ENCODE measurements at regions of chr7 and their contacts with region 1.

Region 1: GRCh38 chr7:74254129-74254857 is at the start of gene RFC2:
- DNase-seq: peak; percentile 92 to 100 (median 98)
- ATAC-seq: peak; percentile 99
- H3K4me3 ChIP-seq: peak within 1 kb of the TSS; percentile 93
- H3K4me3 Mint-ChIP-seq: peak within 1 kb of the TSS; percentile 90 to 97 (median 94)
- H3K27ac ChIP-seq: peak within 1 kb of the TSS; percentile 90
- H3K27ac Mint-ChIP-seq: peak within 1 kb of the TSS; percentile 92 to 97 (median 95)
- H3K4me1 ChIP-seq: peaks cover 6 to 8% of the 10 kb centered on the region in 2 donors
- H3K4me1 Mint-ChIP-seq: peaks cover 0 to 37% (median 27%) of the 10 kb centered on the region in 7 donors
- H3K27me3 ChIP-seq: no peaks in the 10 kb centered on the region
- H3K27me3 Mint-ChIP-seq: no peaks in the 10 kb centered on the region
- total RNA-seq, gene RFC2: 12.0 to 51.7 (median 15.2) TPM

Region 2: GRCh38 chr7:73557108-73557396 is 697.2 kb before region 1 on chr7:
- CTCF ChIA-PET with region 1: interaction called, 4 read pairs
- POLR2A ChIA-PET with region 1: no interaction called
- intact Hi-C with region 1: loop called in 1 of 2 experiments (anchors 5 kb)
- DNase-seq: peak; percentile 86 to 95 (median 91)
- ATAC-seq: peak; percentile 93
- H3K4me3 ChIP-seq: peak overlapping the region; percentile 81
- H3K4me3 Mint-ChIP-seq: peak overlapping the region; percentile 88 to 97 (median 93)
- H3K27ac ChIP-seq: peak overlapping the region; percentile 100
- H3K27ac Mint-ChIP-seq: peak overlapping the region; percentile 92 to 98 (median 95)
- H3K4me1 ChIP-seq: peaks cover 17 to 23% of the 10 kb centered on the region in 2 donors
- H3K4me1 Mint-ChIP-seq: peaks cover 24 to 41% (median 33%) of the 10 kb centered on the region in 7 donors
- H3K27me3 ChIP-seq: no peaks in the 10 kb centered on the region
- H3K27me3 Mint-ChIP-seq: no peaks in the 10 kb centered on the region

Region 3: GRCh38 chr7:74173866-74174605 is 80.3 kb before region 1 on chr7 and contains the start of gene EIF4H:
- CTCF ChIA-PET with region 1: no interaction called
- POLR2A ChIA-PET with region 1: interaction called, 5 read pairs
- intact Hi-C with region 1: loop called (anchors 1 kb)
- DNase-seq: peak; percentile 90 to 97 (median 95)
- ATAC-seq: peak; percentile 97
- H3K4me3 ChIP-seq: peak within 1 kb of the TSS; percentile 87
- H3K4me3 Mint-ChIP-seq: peak within 1 kb of the TSS; percentile 86 to 98 (median 92)
- H3K27ac ChIP-seq: peak within 1 kb of the TSS; percentile 99
- H3K27ac Mint-ChIP-seq: peak within 1 kb of the TSS; percentile 88 to 97 (median 94)
- H3K4me1 ChIP-seq: peaks cover 41 to 43% of the 10 kb centered on the region in 2 donors
- H3K4me1 Mint-ChIP-seq: peaks cover 32 to 57% (median 47%) of the 10 kb centered on the region in 7 donors
- H3K27me3 ChIP-seq: no peaks in the 10 kb centered on the region
- H3K27me3 Mint-ChIP-seq: no peaks in the 10 kb centered on the region
- total RNA-seq, gene EIF4H: 163 to 284 (median 223) TPM

Region 4: GRCh38 chr7:74269757-74270277 is 15.5 kb after region 1 on chr7:
- CTCF ChIA-PET with region 1: no interaction called
- POLR2A ChIA-PET with region 1: interaction called, 3 read pairs
- intact Hi-C with region 1: loop called (anchors 1 to 2 kb)
- DNase-seq: peak in 8 of 9 donors; percentile 36 to 68 (median 58)
- ATAC-seq: peak; percentile 85
- H3K4me3 ChIP-seq: peak overlapping the region; percentile 58
- H3K4me3 Mint-ChIP-seq: peak overlapping the region; percentile 73 to 94 (median 88)
- H3K27ac ChIP-seq: no peak overlapping the region
- H3K27ac Mint-ChIP-seq: peak overlapping the region in 3 of 9 donors; percentile 33 to 70 (median 51)
- H3K4me1 ChIP-seq: no peaks in the 10 kb centered on the region
- H3K4me1 Mint-ChIP-seq: peaks cover 0 to 14% (median 4%) of the 10 kb centered on the region in 7 donors
- H3K27me3 ChIP-seq: no peaks in the 10 kb centered on the region
- H3K27me3 Mint-ChIP-seq: peaks cover 0 to 23% (median 4%) of the 10 kb centered on the region in 5 donors

Region 5: GRCh38 chr7:74525880-74526279 is 271.6 kb after region 1 on chr7:
- CTCF ChIA-PET with region 1: no interaction called
- POLR2A ChIA-PET with region 1: no interaction called
- intact Hi-C with region 1: no loop called
- DNase-seq: no peak
- ATAC-seq: no peak
- H3K4me3 ChIP-seq: no peak overlapping the region
- H3K4me3 Mint-ChIP-seq: no peak overlapping the region
- H3K27ac ChIP-seq: no peak overlapping the region
- H3K27ac Mint-ChIP-seq: no peak overlapping the region
- H3K4me1 ChIP-seq: no peaks in the 10 kb centered on the region
- H3K4me1 Mint-ChIP-seq: no peaks in the 10 kb centered on the region
- H3K27me3 ChIP-seq: no peaks in the 10 kb centered on the region
- H3K27me3 Mint-ChIP-seq: no peaks in the 10 kb centered on the region

Region 6: DNA sequence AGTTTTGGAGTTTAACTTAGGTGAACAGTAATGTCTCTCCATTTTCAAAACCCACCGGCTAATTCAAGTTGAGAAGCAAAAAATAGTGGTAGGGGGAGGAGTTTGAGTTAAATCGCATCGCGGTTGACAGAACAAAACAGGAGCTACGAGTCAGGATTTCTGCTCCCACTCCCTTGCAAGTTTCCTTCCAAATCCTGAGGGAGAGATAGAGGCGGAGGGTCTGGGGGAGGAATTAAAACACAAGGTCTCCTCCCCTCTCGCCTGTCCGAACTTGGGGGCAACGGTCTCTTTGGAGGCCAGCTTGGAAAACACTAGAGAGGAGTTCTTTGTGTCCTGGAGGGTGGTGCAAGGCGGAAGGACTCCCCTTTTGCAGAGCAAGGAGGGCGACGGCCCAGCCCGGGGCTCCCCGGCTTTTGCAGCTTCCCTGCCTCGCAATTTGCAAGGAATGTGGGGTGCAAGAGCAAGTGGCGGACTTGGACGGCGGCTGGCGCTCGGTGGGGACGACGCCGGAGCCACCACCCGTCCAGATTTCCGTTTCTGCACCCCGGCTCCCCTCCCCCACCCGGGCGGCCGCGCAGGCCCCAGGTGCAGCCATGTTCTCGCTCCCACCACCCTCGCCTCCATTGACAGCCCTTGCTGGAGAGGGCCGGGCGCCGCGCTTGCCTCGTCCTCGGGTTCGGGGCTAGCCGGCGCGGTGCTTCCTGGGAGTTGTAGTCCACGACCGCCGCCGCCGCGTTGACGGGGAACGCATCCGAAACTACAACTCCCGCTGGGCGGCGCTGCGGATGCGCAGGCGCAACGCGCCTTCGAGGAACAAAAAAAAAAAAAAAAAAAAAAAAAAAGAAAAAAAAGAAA is 402.8 kb after region 1 on chr7:
- CTCF ChIA-PET with region 1: no interaction called
- POLR2A ChIA-PET with region 1: no interaction called
- intact Hi-C with region 1: loop called (anchors 1 to 5 kb)
- DNase-seq: peak; percentile 94 to 97 (median 97)
- ATAC-seq: peak; percentile 88
- H3K4me3 ChIP-seq: peak overlapping the region; percentile 96
- H3K4me3 Mint-ChIP-seq: peak overlapping the region; percentile 90 to 97 (median 94)
- H3K27ac ChIP-seq: peak overlapping the region; percentile 89
- H3K27ac Mint-ChIP-seq: peak overlapping the region; percentile 86 to 98 (median 94)
- H3K4me1 ChIP-seq: peaks cover 12 to 21% of the 10 kb centered on the region in 2 donors
- H3K4me1 Mint-ChIP-seq: peaks cover 35 to 55% (median 43%) of the 10 kb centered on the region in 7 donors
- H3K27me3 ChIP-seq: no peaks in the 10 kb centered on the region
- H3K27me3 Mint-ChIP-seq: peaks cover 0 to 2% (median 0%) of the 10 kb centered on the region in 5 donors

Measured in naive thymus-derived CD4-positive, alpha-beta T cell (primary cell).